Spleen (tissue), 13 donors: ENCODE measurements at regions of chr3 and their contacts with region 1.

Region 1: GRCh38 chr3:160941885-160942494 is 163.2 kb downstream of the B3GALNT1 start:
- DNase-seq: no peak
- H3K4me3 ChIP-seq: no peak overlapping the region
- H3K27ac ChIP-seq: no peak overlapping the region
- H3K4me1 ChIP-seq: peaks cover 0 to 9% (median 2%) of the 10 kb centered on the region in 6 donors
- H3K27me3 ChIP-seq: no peaks in the 10 kb centered on the region
- CTCF ChIP-seq: peak; percentile 72 to 92 (median 84)
- POLR2A ChIP-seq: no peak

Region 2: GRCh38 chr3:160707187-160707794 is 234.7 kb before region 1 on chr3:
- intact Hi-C with region 1: loop called (anchors 5 kb)
- DNase-seq: no peak
- H3K4me3 ChIP-seq: no peak overlapping the region
- H3K27ac ChIP-seq: no peak overlapping the region
- H3K4me1 ChIP-seq: no peaks in the 10 kb centered on the region
- H3K27me3 ChIP-seq: peaks cover 0 to 19% (median 2%) of the 10 kb centered on the region in 7 donors
- CTCF ChIP-seq: peak in 9 of 11 experiments; percentile 16 to 67 (median 51)
- POLR2A ChIP-seq: no peak

Region 3: GRCh38 chr3:161559177-161559998 is 617.4 kb after region 1 on chr3:
- intact Hi-C with region 1: no loop called
- DNase-seq: no peak
- H3K4me3 ChIP-seq: no peak overlapping the region
- H3K27ac ChIP-seq: no peak overlapping the region
- H3K4me1 ChIP-seq: no peaks in the 10 kb centered on the region
- H3K27me3 ChIP-seq: peaks cover 0 to 12% (median 0%) of the 10 kb centered on the region in 7 donors
- CTCF ChIP-seq: peak in 8 of 11 experiments; percentile 9 to 61 (median 44)
- POLR2A ChIP-seq: no peak